GM10248 (cell line): ENCODE measurements at regions of chr7 and their contacts with region 1.

Region 1: GRCh38 chr7:95501261-95501832 is 15.6 kb downstream of the ASB4 start:
- DNase-seq: peak; percentile 25
- CTCF ChIP-seq: no peak

Region 2: GRCh38 chr7:95470452-95470851 is 30.9 kb before region 1 on chr7:
- CTCF ChIA-PET with region 1: interaction called, 153 read pairs
- POLR2A ChIA-PET with region 1: interaction called, 11 read pairs
- DNase-seq: peak; percentile 45
- CTCF ChIP-seq: no peak